ENCODE measurements at regions of chr7 and their contacts with region 1.

Region 1: GRCh38 chr7:127708788-127709187 is 56.8 kb downstream of the SND1 start:
- DNase-seq: peak; percentile 93
- H3K4me3 ChIP-seq: no peak overlapping the region
- H3K27ac ChIP-seq: no peak overlapping the region
- H3K4me1 ChIP-seq: no peaks in the 10 kb centered on the region
- H3K27me3 ChIP-seq: no peaks in the 10 kb centered on the region
- CTCF ChIP-seq: peak; percentile 69 to 80 (median 79)
- POLR2A ChIP-seq: no peak

Region 2: GRCh38 chr7:127865466-127865865 is 156.7 kb after region 1 on chr7:
- intact Hi-C with region 1: no loop called
- DNase-seq: peak; percentile 19
- H3K4me3 ChIP-seq: no peak overlapping the region
- H3K27ac ChIP-seq: no peak overlapping the region
- H3K4me1 ChIP-seq: no peaks in the 10 kb centered on the region
- H3K27me3 ChIP-seq: no peaks in the 10 kb centered on the region
- CTCF ChIP-seq: no peak
- POLR2A ChIP-seq: no peak

Region 3: GRCh38 chr7:128209229-128210035 is 500.6 kb after region 1 on chr7:
- intact Hi-C with region 1: loop called (anchors 5 kb)
- DNase-seq: peak; percentile 85
- H3K4me3 ChIP-seq: no peak overlapping the region
- H3K27ac ChIP-seq: no peak overlapping the region
- H3K4me1 ChIP-seq: peaks cover 20% of the 10 kb centered on the region
- H3K27me3 ChIP-seq: no peaks in the 10 kb centered on the region
- CTCF ChIP-seq: peak; percentile 97 to 99 (median 99)
- POLR2A ChIP-seq: no peak

Measured in testis (tissue), 5 donors.